ENCODE measurements at regions of chr14 and their contacts with region 1.

Region 1: DNA sequence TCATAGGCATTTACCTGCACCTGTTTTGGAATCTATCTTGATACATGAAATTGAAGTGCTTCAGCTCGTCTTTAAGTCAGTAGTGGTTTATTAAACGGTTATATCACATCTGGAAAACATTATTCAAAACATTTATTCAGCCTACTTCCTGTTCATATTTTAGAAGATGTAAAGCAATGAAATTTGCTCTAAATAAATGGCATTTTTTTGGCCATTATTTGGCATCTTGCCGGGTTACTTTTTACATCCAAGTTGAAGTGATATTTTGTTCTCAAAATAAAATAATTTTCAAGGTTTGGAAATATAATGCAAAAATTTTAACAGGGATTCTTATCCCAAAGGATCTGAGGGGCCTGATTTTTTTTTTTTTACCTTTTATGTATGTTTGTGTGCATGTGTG is 103.2 kb downstream of the EML1 start:
- H3K4me3 ChIP-seq: no peak overlapping the region
- H3K27ac ChIP-seq: no peak overlapping the region
- H3K4me1 ChIP-seq: no peaks in the 10 kb centered on the region; the same call in 1 of the 2 replicates
- CTCF ChIP-seq: no peak

Region 2: DNA sequence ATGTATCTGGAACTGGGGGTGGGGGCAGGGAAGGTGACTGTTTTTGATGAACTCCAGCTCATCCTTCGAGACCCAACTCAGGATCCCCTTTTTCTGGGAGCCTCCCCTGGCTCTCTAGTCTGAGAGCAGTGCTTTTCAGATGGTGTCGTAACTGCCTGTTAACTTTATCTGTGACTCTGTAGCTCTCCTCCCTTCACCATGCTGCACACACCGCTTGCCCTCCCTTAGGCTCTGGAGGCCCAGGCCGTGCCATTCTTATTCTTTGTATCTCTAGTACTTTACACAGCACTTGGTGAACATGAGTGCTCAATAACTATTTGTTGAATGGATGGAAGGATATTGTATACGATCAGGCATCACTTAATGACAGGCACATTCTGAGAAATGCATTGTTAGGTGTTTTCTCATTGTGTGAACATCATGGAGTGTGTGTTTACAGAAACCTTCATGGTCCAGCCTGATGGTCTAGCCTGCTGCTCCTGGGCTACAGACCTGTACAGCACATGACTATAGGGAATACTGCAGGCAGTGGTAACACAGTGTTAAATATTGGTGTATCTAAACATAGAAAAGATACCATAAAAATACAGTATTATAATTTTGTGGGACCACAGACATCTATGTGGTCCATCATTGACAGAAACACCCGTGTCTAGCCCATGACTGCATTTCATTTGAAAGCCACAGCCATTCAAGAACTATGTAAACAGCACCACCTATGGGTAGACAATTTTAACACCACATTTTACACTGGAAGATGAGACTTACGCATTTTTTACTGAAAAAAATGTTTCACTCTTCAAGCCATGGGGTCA is 11.3 kb before region 1 on chr14:
- CTCF ChIA-PET with region 1: interaction called, 38 read pairs
- POLR2A ChIA-PET with region 1: no interaction called
- H3K4me3 ChIP-seq: no peak overlapping the region
- H3K27ac ChIP-seq: no peak overlapping the region
- H3K4me1 ChIP-seq: peaks cover 3% of the 10 kb centered on the region; the same call in 1 of the 2 replicates
- CTCF ChIP-seq: peak; percentile 44; the same call in 1 of the 2 replicates

Measured in HEK293 (cell line).